Activated CD8-positive, alpha-beta T cell treated with anti-CD3 and anti-CD28 coated beads, Interleukin-2, amount 10 ng/mL, durations not matched to agents 7 days and 5 days (primary cell): ENCODE measurements at regions of chr16 and their contacts with region 1.

Region 1: DNA sequence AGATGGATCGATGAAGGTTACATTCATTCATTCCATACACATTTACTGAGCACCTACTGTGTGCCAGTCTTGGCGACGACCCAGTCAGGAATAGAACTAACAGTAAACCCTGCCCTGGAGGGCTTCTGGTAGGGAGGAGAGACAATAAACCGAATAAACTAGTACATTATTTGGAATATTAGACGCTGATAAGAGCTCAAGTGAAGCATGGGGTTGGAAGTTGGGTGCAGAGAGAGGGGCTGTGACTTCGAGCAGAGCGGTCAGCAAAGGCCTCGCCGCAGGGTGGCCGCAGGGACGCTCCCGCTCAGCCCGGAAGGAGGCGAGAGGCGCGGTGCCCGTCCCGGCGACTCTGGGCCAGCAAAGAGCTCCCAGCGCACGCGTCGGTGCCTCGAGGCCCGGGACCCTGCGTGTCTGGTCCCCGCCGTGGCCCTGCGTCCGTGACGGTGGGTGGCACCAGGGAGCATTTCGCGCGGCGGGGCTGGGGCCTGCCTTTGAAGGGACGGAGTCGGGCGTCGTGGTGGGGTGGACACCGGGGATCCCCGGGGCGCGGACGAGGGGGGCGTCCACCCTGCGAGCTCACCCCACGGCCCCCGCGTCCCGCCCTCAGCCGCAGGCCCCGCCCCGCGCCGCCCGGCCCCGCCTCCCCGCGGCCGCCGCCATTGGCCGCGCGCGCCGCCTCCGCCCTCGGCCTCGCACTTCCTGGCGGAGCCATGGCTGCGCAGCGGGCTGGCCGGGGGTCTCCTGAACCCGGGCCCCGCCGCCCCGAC is at the start of gene KLHL36:
- DNase-seq: peak; percentile 66
- ATAC-seq: peak; percentile 84
- H3K4me3 Mint-ChIP-seq: peak within 1 kb of the TSS; percentile 72
- H3K27ac Mint-ChIP-seq: peak within 1 kb of the TSS; percentile 71
- H3K4me1 Mint-ChIP-seq: peaks cover 40% of the 10 kb centered on the region
- H3K27me3 Mint-ChIP-seq: peaks cover 19% of the 10 kb centered on the region
- total RNA-seq, gene KLHL36: 31.4 to 32.6 TPM

Region 2: GRCh38 chr16:84478172-84478947 is 169.7 kb before region 1 on chr16:
- CTCF ChIA-PET with region 1: no interaction called
- POLR2A ChIA-PET with region 1: no interaction called
- DNase-seq: peak; percentile 10
- ATAC-seq: no peak
- H3K4me3 Mint-ChIP-seq: no peak overlapping the region
- H3K27ac Mint-ChIP-seq: no peak overlapping the region
- H3K4me1 Mint-ChIP-seq: peaks cover 3% of the 10 kb centered on the region
- H3K27me3 Mint-ChIP-seq: no peaks in the 10 kb centered on the region

Region 3: GRCh38 chr16:84589975-84590719 is 57.9 kb before region 1 on chr16:
- CTCF ChIA-PET with region 1: no interaction called
- POLR2A ChIA-PET with region 1: no interaction called
- DNase-seq: no peak
- ATAC-seq: no peak
- H3K4me3 Mint-ChIP-seq: no peak overlapping the region
- H3K27ac Mint-ChIP-seq: peak overlapping the region; percentile 39
- H3K4me1 Mint-ChIP-seq: peaks cover 78% of the 10 kb centered on the region
- H3K27me3 Mint-ChIP-seq: no peaks in the 10 kb centered on the region

Region 4: GRCh38 chr16:84635699-84636098 is 12.3 kb before region 1 on chr16:
- CTCF ChIA-PET with region 1: no interaction called
- POLR2A ChIA-PET with region 1: interaction called, 21 read pairs
- DNase-seq: no peak
- ATAC-seq: no peak
- H3K4me3 Mint-ChIP-seq: no peak overlapping the region
- H3K27ac Mint-ChIP-seq: no peak overlapping the region
- H3K4me1 Mint-ChIP-seq: peaks cover 43% of the 10 kb centered on the region
- H3K27me3 Mint-ChIP-seq: peaks cover 26% of the 10 kb centered on the region